H1 (cell line): ENCODE measurements at regions of chr4 and their contacts with region 1.

Region 1: DNA sequence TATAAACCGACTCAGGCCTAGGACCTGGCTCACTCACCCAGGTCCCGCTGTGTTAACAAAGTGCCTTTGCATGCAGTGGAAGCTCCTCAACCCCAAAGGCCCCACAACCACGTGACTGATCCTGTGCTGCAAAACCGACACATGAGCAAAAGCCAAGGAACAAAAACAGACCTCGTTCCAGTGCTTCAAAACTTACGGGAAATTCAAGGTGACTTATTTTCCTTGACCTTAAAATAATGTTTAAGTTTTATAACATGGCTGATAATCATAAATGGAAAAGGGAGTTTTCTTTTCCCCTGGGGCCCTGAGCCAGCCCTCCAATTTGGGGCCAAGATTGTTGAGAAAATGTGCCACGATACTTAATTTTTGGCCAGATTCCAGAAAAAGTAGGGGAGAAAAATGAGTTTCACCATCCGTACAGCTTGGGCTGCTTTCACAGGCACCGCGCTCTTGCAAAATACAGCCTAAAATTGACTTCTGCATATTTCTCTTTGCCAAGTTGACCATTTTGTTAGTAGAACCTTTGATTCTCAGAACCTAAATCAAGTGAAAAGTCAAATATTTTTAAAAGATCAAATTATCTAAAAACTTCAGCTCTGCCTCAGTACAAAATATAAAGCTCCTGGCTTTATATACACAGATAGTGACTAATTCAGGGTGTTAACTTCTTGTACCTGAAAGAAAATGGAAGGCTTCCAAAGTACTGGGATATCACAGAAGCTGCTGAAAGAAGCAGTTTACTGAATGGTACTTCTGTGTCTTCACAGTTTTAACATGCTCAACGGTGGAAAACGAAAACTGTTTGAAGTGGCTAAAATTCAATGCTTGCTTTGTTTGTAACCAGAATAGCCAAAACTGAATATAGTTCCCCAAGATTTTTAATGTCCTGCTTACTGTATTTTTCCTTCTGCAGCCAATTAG is 93.8 kb downstream of the APBB2 start:
- DNase-seq: no peak
- H3K4me3 ChIP-seq: no peak overlapping the region
- H3K27ac ChIP-seq: no peak overlapping the region
- H3K4me1 ChIP-seq: peaks cover 0 to 8% (median 3%) of the 10 kb centered on the region in 4 experiments; a peak in 3 of 7 replicates
- H3K27me3 ChIP-seq: no peaks in the 10 kb centered on the region
- CTCF ChIP-seq: no peak
- EP300 ChIP-seq: no peak
- POLR2A ChIP-seq: no peak
- RAD21 ChIP-seq: no peak

Region 2: DNA sequence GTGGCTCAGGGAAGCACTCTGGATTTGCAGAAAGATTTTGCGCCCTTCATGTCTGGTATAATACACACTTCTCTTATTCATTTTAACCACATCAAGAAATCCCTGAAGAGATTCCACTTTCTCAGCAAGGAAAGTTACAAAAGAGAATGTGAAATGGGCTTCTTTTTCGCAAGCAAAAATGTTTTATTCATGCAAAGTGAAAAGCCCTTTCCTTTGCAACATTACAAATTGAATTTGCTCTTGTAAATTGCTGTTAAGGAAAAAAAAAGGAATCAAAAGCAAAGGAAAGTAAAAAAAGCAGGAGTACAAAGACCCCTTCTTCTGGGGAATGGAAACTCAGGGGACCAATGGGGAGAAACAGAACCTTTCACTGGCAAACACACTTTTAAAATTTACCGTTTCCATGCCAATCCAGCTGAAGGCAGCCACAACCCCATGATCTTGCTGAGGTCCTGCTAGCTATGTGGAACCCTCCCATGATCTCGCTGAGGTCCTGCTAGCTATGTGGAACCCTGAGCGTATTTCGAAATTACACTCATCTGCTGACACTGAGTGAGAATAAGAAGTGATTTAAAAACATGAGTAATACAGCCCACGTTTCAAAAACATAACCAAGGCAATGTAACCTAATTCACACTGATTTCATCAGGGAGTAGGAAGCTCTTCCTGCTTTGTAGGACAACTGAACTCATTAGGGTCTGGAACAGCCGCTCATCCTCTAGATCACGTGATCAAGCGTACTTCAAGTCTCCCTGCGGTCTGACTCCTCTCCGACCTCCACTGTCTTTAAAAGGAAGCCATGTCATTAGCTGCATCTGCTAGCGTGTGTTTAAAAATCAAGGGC is 233.0 kb before region 1 on chr4:
- CTCF ChIA-PET with region 1: no interaction called
- POLR2A ChIA-PET with region 1: no interaction called
- DNase-seq: no peak
- H3K4me3 ChIP-seq: no peak overlapping the region
- H3K27ac ChIP-seq: no peak overlapping the region
- H3K4me1 ChIP-seq: no peaks in the 10 kb centered on the region
- H3K27me3 ChIP-seq: no peaks in the 10 kb centered on the region
- CTCF ChIP-seq: no peak
- EP300 ChIP-seq: no peak
- POLR2A ChIP-seq: no peak
- RAD21 ChIP-seq: no peak

Region 3: DNA sequence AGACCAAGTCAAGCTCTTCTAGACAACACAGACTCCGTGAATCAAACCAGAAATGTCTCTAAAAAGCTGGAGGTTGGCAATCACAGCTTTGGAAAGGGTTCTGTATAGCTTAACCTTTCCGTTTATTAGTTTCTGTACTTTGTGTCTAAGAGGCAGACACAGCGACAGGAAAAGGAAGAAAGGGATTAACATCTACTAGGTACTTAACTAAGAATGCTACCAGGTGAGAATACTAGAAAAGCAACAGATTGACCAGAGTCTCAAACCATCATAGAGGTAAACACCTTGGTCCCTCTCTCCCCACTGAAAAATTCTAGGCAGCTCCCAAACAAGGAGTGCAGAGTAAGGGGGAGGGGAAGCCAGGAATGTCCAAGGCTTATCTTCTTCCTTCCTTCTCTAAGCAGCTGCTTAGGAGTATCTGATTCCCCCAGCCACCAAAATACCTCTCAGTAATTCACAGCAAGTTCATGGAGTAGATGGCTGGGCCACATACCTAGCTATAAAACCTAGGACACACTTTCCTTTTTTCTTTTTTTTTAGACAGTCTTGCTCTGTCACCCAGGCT is 13.0 kb after region 1 on chr4:
- CTCF ChIA-PET with region 1: interaction called, 12 read pairs
- POLR2A ChIA-PET with region 1: interaction called, 23 read pairs
- DNase-seq: no peak
- H3K4me3 ChIP-seq: no peak overlapping the region; a peak in 1 of 8 replicates
- H3K27ac ChIP-seq: no peak overlapping the region
- H3K4me1 ChIP-seq: peaks cover 9 to 23% (median 14%) of the 10 kb centered on the region in 4 experiments
- H3K27me3 ChIP-seq: no peaks in the 10 kb centered on the region
- CTCF ChIP-seq: no peak
- EP300 ChIP-seq: no peak
- POLR2A ChIP-seq: no peak
- RAD21 ChIP-seq: no peak